Heart right ventricle (tissue), 16 donors: ENCODE measurements at regions of chr15 and their contacts with region 1.

Region 1: GRCh38 chr15:58388211-58388610 is 43.6 kb upstream of the LIPC start:
- DNase-seq: no peak
- ATAC-seq: no peak
- H3K4me3 ChIP-seq: no peak overlapping the region
- H3K27ac ChIP-seq: no peak overlapping the region
- H3K4me1 ChIP-seq: no peaks in the 10 kb centered on the region
- H3K27me3 ChIP-seq: no peaks in the 10 kb centered on the region
- CTCF ChIP-seq: no peak

Region 2: GRCh38 chr15:58369956-58370355 is 18.3 kb before region 1 on chr15:
- intact Hi-C with region 1: loop called in 1 of 10 experiments (anchors 2 kb)
- DNase-seq: no peak
- ATAC-seq: no peak
- H3K4me3 ChIP-seq: no peak overlapping the region
- H3K27ac ChIP-seq: no peak overlapping the region
- H3K4me1 ChIP-seq: no peaks in the 10 kb centered on the region
- H3K27me3 ChIP-seq: no peaks in the 10 kb centered on the region
- CTCF ChIP-seq: no peak